ENCODE measurements at regions of chr13 and their contacts with region 1.

Region 1: DNA sequence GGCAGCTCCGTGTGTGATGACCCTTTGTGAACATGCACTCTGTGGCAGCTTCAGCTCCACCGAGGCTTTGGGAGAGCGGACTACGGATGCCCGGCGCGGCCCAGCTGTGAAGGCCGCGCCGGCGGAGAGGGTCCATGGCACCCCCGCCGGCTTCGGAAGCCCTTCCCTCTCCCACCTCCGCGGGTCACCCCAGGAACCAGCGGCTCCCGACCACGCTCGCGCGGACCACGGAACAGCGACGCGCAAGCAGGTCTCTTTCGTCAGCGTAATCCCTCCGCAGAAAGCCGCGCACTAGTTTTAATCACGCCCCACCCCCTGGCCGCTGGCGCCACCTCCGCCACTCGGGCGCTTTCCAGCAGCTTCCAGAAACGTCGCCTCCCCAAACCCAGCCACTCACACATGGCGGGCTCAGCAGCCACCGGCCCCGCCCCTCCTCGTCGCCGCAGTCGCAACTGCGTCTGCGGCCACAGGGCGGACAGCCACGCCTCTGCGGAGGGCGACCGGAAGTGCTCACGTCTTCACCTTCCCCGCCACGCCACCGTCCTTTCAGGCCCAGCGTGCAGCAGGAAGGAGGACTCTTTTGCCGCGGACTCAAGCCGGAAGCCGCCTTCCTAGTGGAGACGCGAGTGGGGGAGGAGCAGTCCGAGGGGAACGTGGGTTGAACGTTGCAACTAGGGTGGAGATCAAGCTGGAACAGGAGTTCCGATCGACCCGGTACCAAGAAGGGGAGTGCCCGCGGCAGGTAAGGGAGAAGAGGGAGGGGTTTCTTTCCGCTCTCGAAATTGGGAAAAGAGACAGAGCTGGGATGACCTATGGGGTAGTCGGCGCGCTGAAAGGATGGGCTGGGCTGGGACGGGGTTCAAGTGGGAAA is at the start of gene USPL1:
- DNase-seq: peak; percentile 97 to 99 (median 98)
- H3K4me3 ChIP-seq: peak within 1 kb of the TSS; percentile 98 to 99
- H3K4me3 Mint-ChIP-seq: no peak within 1 kb of the TSS
- H3K27ac ChIP-seq: peak within 1 kb of the TSS; percentile 94
- H3K27ac Mint-ChIP-seq: no peak within 1 kb of the TSS
- H3K4me1 ChIP-seq: peaks cover 40% of the 10 kb centered on the region
- H3K4me1 Mint-ChIP-seq: peaks cover 15 to 27% (median 25%) of the 10 kb centered on the region in 4 donors
- H3K27me3 ChIP-seq: no peaks in the 10 kb centered on the region
- H3K27me3 Mint-ChIP-seq: no peaks in the 10 kb centered on the region
- total RNA-seq, gene USPL1: 30.4 to 31.8 TPM

Region 2: DNA sequence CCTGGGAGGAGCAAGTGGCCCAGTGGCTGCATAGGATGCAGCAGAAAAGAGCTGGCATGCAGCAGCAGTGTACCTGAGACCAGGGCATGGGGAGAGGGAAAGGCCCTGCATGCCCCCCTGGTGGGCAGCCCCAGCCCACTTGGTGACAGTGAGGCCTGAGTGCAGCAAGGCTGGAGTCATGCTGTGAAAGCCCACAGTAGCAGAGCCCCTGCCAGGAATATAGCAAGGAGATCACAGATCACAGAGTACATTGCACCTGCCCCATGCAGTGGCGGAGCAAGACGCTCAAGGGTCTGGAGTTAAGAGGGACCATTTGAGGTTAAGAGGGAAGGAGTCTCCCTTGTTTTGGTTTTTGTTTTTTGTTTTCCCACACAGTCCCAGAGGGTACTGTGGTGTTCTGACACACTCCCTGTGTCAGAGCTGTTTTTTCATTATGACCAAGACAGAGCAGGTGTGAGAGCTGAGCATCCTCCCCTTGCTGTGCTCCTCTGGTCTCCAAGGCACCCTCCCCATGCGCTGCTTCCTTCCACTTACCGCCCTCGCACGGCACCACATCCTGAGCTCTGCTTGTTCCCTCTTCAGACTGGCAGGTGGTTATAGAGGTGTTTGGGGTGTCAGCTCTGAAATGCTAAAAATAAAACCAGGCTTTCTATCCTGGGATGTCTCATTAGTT is 682.1 kb before region 1 on chr13:
- CTCF ChIA-PET with region 1: no interaction called
- POLR2A ChIA-PET with region 1: interaction called, 16 read pairs
- intact Hi-C with region 1: loop called (anchors 10 kb)
- DNase-seq: peak; percentile 80 to 86 (median 84)
- H3K4me3 ChIP-seq: peak overlapping the region; percentile 72 to 82
- H3K4me3 Mint-ChIP-seq: peak overlapping the region; percentile 86 to 96 (median 94)
- H3K27ac ChIP-seq: peak overlapping the region; percentile 59
- H3K27ac Mint-ChIP-seq: peak overlapping the region; percentile 86 to 97 (median 92)
- H3K4me1 ChIP-seq: peaks cover 64% of the 10 kb centered on the region
- H3K4me1 Mint-ChIP-seq: peaks cover 46 to 77% (median 64%) of the 10 kb centered on the region in 4 donors
- H3K27me3 ChIP-seq: no peaks in the 10 kb centered on the region
- H3K27me3 Mint-ChIP-seq: peaks cover 0 to 2% of the 10 kb centered on the region in 2 donors

Region 3: GRCh38 chr13:30346153-30346788 is 271.3 kb before region 1 on chr13:
- CTCF ChIA-PET with region 1: no interaction called
- POLR2A ChIA-PET with region 1: interaction called, 10 read pairs
- intact Hi-C with region 1: no loop called
- DNase-seq: peak; percentile 76 to 82 (median 79)
- H3K4me3 ChIP-seq: peak overlapping the region in 1 of 2 donors; percentile 10
- H3K4me3 Mint-ChIP-seq: peak overlapping the region; percentile 45 to 88 (median 70)
- H3K27ac ChIP-seq: no peak overlapping the region
- H3K27ac Mint-ChIP-seq: peak overlapping the region; percentile 10 to 86 (median 45)
- H3K4me1 ChIP-seq: peaks cover 42% of the 10 kb centered on the region
- H3K4me1 Mint-ChIP-seq: peaks cover 35 to 48% (median 41%) of the 10 kb centered on the region in 4 donors
- H3K27me3 ChIP-seq: no peaks in the 10 kb centered on the region
- H3K27me3 Mint-ChIP-seq: no peaks in the 10 kb centered on the region

Region 4: GRCh38 chr13:30408319-30409101 is 209.0 kb before region 1 on chr13:
- CTCF ChIA-PET with region 1: no interaction called
- POLR2A ChIA-PET with region 1: interaction called, 15 read pairs
- intact Hi-C with region 1: loop called (anchors 1 kb)
- DNase-seq: peak; percentile 87 to 91 (median 87)
- H3K4me3 ChIP-seq: peak overlapping the region in 1 of 2 donors; percentile 33
- H3K4me3 Mint-ChIP-seq: peak overlapping the region; percentile 46 to 79 (median 68)
- H3K27ac ChIP-seq: peak overlapping the region; percentile 40
- H3K27ac Mint-ChIP-seq: peak overlapping the region; percentile 75 to 91 (median 87)
- H3K4me1 ChIP-seq: peaks cover 14% of the 10 kb centered on the region
- H3K4me1 Mint-ChIP-seq: peaks cover 14 to 52% (median 27%) of the 10 kb centered on the region in 4 donors
- H3K27me3 ChIP-seq: no peaks in the 10 kb centered on the region
- H3K27me3 Mint-ChIP-seq: no peaks in the 10 kb centered on the region

Region 5: DNA sequence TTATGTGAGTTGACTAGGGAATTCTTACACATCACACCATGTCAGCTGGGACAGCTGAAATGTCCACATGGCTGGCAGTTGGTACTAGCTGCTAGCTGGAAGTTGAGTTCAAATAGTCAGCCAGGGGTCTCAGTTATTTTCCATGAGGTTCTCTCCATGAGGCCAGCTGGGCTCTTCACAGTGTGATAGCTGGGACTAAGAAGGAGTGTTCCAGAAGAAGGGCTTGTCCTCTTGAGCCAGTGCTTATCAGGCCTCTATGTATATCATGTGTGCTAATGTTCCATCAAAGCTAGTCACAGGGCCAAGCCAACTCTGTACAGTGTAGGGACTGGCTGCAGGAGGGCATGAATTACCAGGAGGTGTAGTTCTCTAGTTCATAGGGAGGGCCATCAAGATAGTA is 12.0 kb after region 1 on chr13:
- CTCF ChIA-PET with region 1: interaction called, 3 read pairs
- POLR2A ChIA-PET with region 1: interaction called, 41 read pairs
- intact Hi-C with region 1: no loop called
- DNase-seq: no peak
- H3K4me3 ChIP-seq: no peak overlapping the region
- H3K4me3 Mint-ChIP-seq: no peak overlapping the region
- H3K27ac ChIP-seq: no peak overlapping the region
- H3K27ac Mint-ChIP-seq: peak overlapping the region in 4 of 7 donors; percentile 17 to 50 (median 32)
- H3K4me1 ChIP-seq: peaks cover 35% of the 10 kb centered on the region
- H3K4me1 Mint-ChIP-seq: peaks cover 33 to 61% (median 43%) of the 10 kb centered on the region in 4 donors
- H3K27me3 ChIP-seq: no peaks in the 10 kb centered on the region
- H3K27me3 Mint-ChIP-seq: no peaks in the 10 kb centered on the region

Region 6: DNA sequence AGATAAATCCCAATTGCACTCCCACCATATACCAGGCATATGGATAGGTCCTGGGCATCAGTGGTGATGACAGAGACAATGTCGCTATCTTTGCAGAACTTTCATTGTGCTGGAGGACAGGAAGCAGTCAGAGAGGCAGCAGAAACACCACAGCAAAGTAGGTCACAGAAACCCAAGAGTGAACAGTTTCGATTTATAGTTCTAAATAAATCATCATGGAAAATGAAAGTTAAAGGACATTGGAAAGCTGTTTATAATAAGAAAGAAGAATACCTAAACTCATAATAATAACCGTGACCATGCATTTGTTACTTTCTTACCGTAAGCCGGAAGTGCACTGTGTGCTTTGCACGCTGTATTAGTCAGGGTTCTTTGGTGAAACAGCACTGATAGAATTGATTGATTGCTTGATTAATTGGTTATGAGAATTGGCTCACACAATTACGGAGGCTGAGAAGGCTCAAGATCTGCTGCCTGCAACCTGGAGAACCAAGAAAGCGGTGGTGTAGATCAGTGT is 156.7 kb after region 1 on chr13:
- CTCF ChIA-PET with region 1: interaction called, 3 read pairs
- POLR2A ChIA-PET with region 1: interaction called, 22 read pairs
- intact Hi-C with region 1: no loop called
- DNase-seq: peak; percentile 55 to 73 (median 67)
- H3K4me3 ChIP-seq: peak overlapping the region in 1 of 2 donors; percentile 48
- H3K4me3 Mint-ChIP-seq: peak overlapping the region; percentile 65 to 84 (median 74)
- H3K27ac ChIP-seq: peak overlapping the region; percentile 58
- H3K27ac Mint-ChIP-seq: peak overlapping the region; percentile 86 to 96 (median 94)
- H3K4me1 ChIP-seq: peaks cover 23% of the 10 kb centered on the region
- H3K4me1 Mint-ChIP-seq: peaks cover 25 to 42% (median 32%) of the 10 kb centered on the region in 4 donors
- H3K27me3 ChIP-seq: no peaks in the 10 kb centered on the region
- H3K27me3 Mint-ChIP-seq: no peaks in the 10 kb centered on the region

Measured in CD4-positive, alpha-beta memory T cell (primary cell).